ENCODE measurements at regions of chr3 and their contacts with region 1.

Region 1: GRCh38 chr3:123096731-123097130 is 29.9 kb downstream of the PDIA5 start:
- DNase-seq: peak; percentile 77
- ATAC-seq: peak; percentile 85

Region 2: GRCh38 chr3:123201566-123202427 is 105.1 kb after region 1 on chr3 and contains the start of gene SEC22A:
- intact Hi-C with region 1: loop called (anchors 10 kb)
- DNase-seq: peak; percentile 95
- ATAC-seq: peak; percentile 100
- total RNA-seq, gene SEC22A: 14.6 TPM